ENCODE measurements at regions of chr14 and their contacts with region 1.

Region 1: DNA sequence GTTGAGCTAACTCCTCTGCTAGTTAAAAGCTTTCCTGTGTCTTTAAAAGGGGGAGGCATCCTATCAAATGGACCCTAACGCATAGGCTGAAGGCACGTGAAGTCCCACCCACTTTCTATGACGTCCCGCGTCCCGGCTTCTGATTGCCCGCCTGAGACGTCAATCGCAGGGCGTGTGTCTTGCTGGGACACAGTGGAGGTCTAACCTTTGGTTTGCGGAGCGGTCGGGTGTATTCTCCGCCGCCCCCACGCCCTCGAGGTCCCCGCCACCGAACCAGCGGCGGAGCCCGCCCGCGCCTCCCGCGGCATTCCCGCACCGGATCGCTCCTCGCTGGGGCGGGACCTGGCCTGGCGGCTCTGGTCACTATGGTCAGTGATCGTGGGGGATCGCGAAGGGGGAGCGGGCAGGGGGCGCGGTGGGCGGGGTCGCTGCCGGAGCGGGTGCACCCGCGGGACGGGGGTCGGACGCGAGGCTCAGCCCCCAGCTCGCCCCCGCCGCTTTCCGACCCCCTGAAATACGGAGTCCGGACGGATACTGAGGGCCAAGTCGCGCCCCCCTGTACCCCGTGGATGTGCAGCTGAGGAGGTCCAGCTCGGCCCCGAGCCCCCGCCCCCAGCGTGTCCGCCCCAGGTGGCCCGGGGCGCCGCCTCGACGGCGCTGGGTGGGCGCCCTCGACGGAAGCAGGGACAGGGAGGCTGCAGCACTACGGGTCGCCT is at the start of gene OTUB2:
- DNase-seq: peak; percentile 99
- total RNA-seq, gene OTUB2: 3.5 and 4.4 TPM in 2 replicates

Region 2: DNA sequence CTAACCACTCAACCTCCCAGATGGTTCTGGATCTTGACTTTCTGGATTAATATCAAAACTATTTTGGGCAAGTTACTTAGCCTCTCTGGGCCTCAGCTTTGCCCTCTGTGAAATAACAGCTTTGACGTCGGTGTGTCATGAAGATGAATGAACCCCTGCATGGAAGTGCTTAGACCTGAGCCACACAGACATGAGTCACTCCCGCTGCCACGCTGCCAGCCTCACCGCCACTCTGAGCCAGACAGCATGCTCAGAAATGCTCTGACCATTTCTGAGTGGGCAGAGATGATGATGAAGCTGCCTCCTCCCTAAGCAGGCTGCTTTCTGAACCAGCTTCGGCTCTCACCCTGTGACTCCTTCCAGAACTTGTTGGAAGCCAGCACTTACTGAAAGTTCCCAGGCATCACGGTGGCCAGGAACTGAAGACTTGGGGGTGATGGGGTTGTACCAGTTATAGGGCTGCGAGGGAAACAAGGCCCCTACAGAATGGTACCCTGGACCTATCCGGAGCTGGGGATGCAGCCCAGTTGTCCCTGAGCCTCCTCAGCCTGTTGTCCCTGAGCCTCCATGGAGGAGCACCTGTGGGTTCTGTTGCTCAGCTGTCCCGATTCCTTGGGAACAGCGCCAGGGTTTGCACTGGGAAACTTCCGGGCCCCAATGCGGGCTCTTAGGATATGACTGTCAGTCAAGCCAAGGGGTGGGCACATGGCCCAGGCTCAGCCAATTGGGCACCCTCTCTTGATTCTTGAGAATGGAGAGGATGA is 31.2 kb before region 1 on chr14:
- in situ Hi-C with region 1: no loop called
- DNase-seq: no peak

Region 3: GRCh38 chr14:94180655-94181271 is 154.4 kb after region 1 on chr14:
- in situ Hi-C with region 1: loop called (anchors 25 kb)
- DNase-seq: peak; percentile 89

Measured in SK-MEL-5 (cell line).